ENCODE measurements at regions of chr3 and their contacts with region 1.

Region 1: GRCh38 chr3:72949016-72949415 is 47.6 kb upstream of the PPP4R2 start:
- DNase-seq: no peak
- ATAC-seq: peak; percentile 45 to 69
- H3K4me3 ChIP-seq: no peak overlapping the region
- H3K27ac ChIP-seq: peak overlapping the region; percentile 48
- H3K4me1 ChIP-seq: peaks cover 6% of the 10 kb centered on the region
- H3K27me3 ChIP-seq: no peaks in the 10 kb centered on the region

Region 2: GRCh38 chr3:73056014-73056844 is 107.2 kb after region 1 on chr3:
- intact Hi-C with region 1: loop called in 1 of 4 experiments (anchors 10 kb)
- DNase-seq: no peak
- ATAC-seq: peak in 1 of 2 donors; percentile 52
- H3K4me3 ChIP-seq: no peak overlapping the region
- H3K27ac ChIP-seq: no peak overlapping the region
- H3K4me1 ChIP-seq: no peaks in the 10 kb centered on the region
- H3K27me3 ChIP-seq: no peaks in the 10 kb centered on the region

Measured in right cardiac atrium (tissue), 5 donors.